ENCODE measurements at regions of chr12 and their contacts with region 1.

Region 1: DNA sequence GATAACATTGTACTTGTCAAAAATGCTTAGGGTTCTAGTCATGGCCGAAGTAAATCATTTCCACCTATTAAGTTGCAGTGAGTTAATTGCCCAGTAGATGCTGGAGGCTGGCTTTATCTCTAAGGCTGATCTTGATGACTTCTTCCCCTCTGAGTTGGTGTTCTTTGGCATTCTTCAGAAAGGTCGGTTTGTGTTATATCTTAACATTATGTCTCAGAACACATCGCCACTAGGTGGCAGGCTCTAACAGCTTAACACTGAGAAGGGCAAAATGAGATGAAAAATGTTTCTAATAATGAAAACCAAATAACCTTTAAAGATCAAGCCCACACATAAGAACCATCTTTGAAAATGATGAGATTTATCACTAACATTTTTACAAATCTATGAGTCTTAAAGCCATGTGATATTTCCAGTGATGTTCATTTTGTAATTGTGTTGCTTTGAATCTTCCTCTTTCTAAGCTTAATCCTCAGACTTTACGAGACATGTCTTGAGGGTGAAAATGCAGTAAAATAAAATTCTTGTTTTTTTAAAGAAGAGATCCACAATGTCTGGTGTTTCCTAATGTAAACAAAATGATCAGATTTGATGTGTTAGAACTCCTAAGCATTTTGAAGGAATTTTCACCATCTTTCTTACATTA is 28.6 kb downstream of the SUDS3 start:
- DNase-seq: peak in 1 of 2 donors; percentile 48
- ATAC-seq: no peak
- H3K4me3 ChIP-seq: no peak overlapping the region
- H3K27ac ChIP-seq: no peak overlapping the region
- H3K4me1 ChIP-seq: peaks cover 0 to 4% (median 0%) of the 10 kb centered on the region in 9 donors
- H3K27me3 ChIP-seq: no peaks in the 10 kb centered on the region
- CTCF ChIP-seq: peak; percentile 55 to 83 (median 75)

Region 2: DNA sequence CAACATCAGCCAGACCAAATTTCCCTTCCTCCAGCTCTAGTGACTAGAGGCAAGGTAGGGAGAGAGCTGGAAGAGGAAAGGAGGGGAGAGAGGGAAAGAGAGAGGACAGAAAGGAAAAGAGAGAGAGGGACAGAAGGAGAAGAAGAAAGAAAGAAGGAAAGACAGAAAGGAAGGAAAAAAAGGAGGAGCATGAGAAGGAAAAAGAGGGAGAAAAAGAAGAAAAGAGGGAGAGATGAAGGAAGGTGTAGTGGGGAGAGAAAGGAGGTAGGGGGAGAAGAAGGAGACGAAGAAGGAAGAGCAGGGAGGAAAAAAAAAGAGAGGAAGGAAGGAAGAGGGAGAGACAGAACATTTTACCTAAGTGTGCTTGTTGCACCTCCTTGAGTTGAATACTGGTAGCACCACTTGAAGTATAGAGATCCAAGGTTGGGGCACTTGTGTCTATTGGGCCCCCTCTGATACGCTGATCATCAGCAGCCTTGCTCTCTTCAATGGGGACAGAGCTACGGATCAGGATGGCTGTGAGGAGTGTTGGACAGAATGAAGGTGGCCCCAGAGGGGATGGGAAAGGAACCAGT is 203.9 kb after region 1 on chr12:
- intact Hi-C with region 1: loop called in 1 of 10 experiments (anchors 10 kb)
- DNase-seq: no peak
- ATAC-seq: no peak
- H3K4me3 ChIP-seq: no peak overlapping the region
- H3K27ac ChIP-seq: no peak overlapping the region
- H3K4me1 ChIP-seq: no peaks in the 10 kb centered on the region
- H3K27me3 ChIP-seq: peaks cover 0 to 9% (median 0%) of the 10 kb centered on the region in 7 donors
- CTCF ChIP-seq: peak in 5 of 9 donors; percentile 14 to 34 (median 22)

Region 3: GRCh38 chr12:118625050-118625675 is 220.2 kb after region 1 on chr12:
- intact Hi-C with region 1: loop called in 1 of 10 experiments (anchors 10 kb)
- DNase-seq: peak in 1 of 2 donors; percentile 57
- ATAC-seq: peak; percentile 59 to 94 (median 88)
- H3K4me3 ChIP-seq: no peak overlapping the region
- H3K27ac ChIP-seq: peak overlapping the region in 1 of 10 donors; percentile 15
- H3K4me1 ChIP-seq: no peaks in the 10 kb centered on the region
- H3K27me3 ChIP-seq: no peaks in the 10 kb centered on the region
- CTCF ChIP-seq: no peak

Region 4: GRCh38 chr12:119036878-119037825 is 632.2 kb after region 1 on chr12:
- intact Hi-C with region 1: loop called in 4 of 10 experiments (anchors 10 kb)
- DNase-seq: peak in 1 of 2 donors; percentile 6
- ATAC-seq: no peak
- H3K4me3 ChIP-seq: no peak overlapping the region
- H3K27ac ChIP-seq: no peak overlapping the region
- H3K4me1 ChIP-seq: no peaks in the 10 kb centered on the region
- H3K27me3 ChIP-seq: peaks cover 0 to 29% (median 6%) of the 10 kb centered on the region in 7 donors
- CTCF ChIP-seq: peak in 8 of 9 donors; percentile 13 to 58 (median 52)

Region 5: GRCh38 chr12:119412811-119413794 is 1008.1 kb after region 1 on chr12:
- intact Hi-C with region 1: loop called in 2 of 10 experiments (anchors 10 kb)
- DNase-seq: peak; percentile 44 to 72
- ATAC-seq: peak; percentile 26 to 80 (median 64)
- H3K4me3 ChIP-seq: no peak overlapping the region
- H3K27ac ChIP-seq: no peak overlapping the region
- H3K4me1 ChIP-seq: peaks cover 0 to 16% (median 5%) of the 10 kb centered on the region in 9 donors
- H3K27me3 ChIP-seq: no peaks in the 10 kb centered on the region
- CTCF ChIP-seq: peak; percentile 68 to 94 (median 87)

Region 6: DNA sequence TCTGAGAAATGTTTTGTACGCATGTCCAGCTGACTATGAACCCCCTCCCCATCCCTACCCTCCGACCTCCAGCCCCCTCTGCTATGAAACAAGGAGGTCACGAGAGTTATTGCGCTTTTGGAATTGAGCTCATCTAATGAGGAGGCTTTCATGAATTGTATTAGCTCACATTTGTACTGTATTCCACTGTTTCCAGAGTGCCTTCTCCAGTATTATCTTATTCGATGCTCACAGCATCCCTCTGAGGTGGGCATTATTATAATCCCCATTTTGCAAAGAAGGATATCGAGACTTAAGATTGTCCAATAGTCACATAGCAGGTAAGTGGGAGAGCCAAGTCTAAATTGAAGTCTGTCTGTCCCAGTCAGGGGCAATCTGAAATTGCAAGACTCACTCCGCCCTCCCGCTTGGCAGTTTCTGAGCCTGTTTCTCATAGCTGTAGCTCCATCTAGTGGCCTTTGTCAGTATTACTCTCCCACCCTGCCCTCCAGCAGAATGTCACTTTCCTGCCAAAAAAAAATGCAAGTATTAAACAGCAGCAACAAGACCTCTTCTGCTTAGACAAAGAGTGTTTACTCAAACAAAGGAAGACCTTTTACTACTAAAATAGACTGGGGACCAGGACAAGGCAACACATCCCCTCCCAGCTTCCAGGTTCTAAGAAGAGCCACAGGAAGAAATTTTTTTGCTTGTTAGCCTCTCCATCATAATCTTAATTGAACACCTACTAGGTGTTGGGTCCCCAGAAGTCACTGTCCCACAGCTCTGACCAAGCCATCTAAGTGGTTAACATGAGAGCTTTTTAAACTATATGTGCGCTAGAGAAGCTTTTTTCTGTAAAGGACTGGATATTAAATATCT is 1140.0 kb after region 1 on chr12:
- intact Hi-C with region 1: loop called in 4 of 10 experiments (anchors 10 kb)
- DNase-seq: peak; percentile 23 to 59
- ATAC-seq: peak in 7 of 8 donors; percentile 39 to 75 (median 67)
- H3K4me3 ChIP-seq: no peak overlapping the region
- H3K27ac ChIP-seq: no peak overlapping the region
- H3K4me1 ChIP-seq: no peaks in the 10 kb centered on the region
- H3K27me3 ChIP-seq: peaks cover 0 to 25% (median 5%) of the 10 kb centered on the region in 7 donors
- CTCF ChIP-seq: peak; percentile 78 to 91 (median 88)

Region 7: GRCh38 chr12:119589097-119589496 is 1184.1 kb after region 1 on chr12:
- intact Hi-C with region 1: no loop called
- DNase-seq: no peak
- ATAC-seq: peak in 3 of 8 donors; percentile 37 to 41 (median 38)
- H3K4me3 ChIP-seq: no peak overlapping the region
- H3K27ac ChIP-seq: no peak overlapping the region
- H3K4me1 ChIP-seq: peaks cover 0 to 18% (median 4%) of the 10 kb centered on the region in 9 donors
- H3K27me3 ChIP-seq: peaks cover 0 to 37% (median 25%) of the 10 kb centered on the region in 7 donors
- CTCF ChIP-seq: peak in 1 of 9 donors; percentile 16